ENCODE measurements at regions of chr19 and their contacts with region 1.

Region 1: DNA sequence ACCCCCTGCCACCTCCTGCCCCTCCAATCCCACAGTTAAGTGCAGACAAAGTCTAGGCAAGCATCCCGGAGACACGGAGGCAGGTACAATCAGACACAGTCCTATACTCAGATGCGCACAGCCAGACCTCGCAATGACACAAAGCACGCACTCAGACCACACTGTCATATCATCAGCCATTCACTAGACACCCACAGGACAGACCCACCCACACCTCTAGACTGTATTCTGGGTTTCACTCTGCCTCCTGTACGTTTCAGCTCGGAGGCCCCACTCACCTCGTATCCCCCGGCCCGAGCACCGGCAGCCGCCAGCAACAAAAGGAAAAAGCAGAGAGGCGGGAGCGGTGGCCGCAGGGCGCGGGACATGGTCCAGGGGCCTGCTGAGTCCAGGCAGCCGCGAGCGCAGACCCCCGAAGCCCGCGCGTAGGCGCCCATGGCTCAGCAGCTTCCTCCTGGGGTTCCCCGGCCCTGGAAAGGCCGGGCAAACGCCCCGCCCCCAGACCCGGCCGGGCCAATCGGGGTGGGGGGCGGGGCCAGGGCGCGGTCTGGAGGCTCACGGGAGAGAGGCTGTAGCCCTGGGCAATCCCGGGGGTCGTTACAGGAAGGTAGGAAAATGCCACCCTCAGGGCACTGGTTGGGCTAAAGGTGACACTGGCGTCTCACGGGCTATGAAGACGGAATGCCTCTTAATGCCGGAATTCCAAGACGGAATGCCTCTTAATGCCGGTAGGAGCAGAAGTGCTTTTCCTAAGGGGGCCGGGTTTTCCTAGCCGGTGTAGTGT is at the starts of genes MAN2B1 and WDR83:
- DNase-seq: no peak
- ATAC-seq: peak; percentile 81
- H3K4me3 ChIP-seq: peak within 1 kb of the TSS; percentile 61 to 84
- H3K27ac ChIP-seq: peak within 1 kb of the TSS; percentile 58
- H3K4me1 ChIP-seq: peaks cover 19 to 37% of the 10 kb centered on the region in 2 experiments
- H3K27me3 ChIP-seq: no peaks in the 10 kb centered on the region
- CTCF ChIP-seq: no peak
- POLR2A ChIP-seq: no peak
- RAD21 ChIP-seq: no peak
- total RNA-seq, gene MAN2B1: 48.3 TPM
- total RNA-seq, gene WDR83: 20.1 TPM

Region 2: DNA sequence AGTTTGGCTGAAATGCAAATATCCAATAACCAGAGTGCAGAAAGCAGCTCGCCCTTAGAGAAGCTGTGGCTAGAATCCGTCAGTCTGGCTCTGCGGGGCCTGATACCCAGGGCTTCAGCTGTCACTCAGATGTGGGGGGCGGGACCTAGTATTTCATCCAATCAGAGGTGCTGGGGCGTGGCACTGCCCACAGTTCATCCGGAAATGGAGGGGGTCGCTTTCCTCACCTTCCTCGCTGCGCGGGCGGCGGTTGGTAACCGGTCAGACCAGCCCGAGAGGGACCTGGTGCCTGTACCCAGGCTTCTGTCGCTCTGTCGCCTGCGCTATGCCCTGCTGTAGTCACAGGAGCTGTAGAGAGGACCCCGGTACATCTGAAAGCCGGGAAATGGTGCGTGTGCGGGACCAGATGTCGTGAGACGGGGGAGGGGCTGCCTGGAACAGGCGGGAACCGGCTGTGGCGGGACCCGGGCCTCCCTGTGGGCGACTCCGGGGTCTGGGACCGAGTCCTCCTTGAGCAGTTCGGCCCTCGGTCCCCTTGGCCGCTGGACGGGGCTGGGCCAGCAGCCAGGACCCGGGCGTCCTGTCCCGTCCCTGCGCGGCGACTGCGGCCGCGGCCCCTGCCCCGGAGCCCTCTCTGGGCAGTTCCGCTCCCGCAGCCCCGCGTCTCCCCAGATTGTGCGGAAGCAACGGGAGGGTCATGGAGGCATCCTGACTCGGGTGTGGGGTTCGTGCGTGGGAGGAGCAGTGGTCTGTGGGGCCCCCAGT is 741.4 kb before region 1 on chr19 and contains the start of gene ZNF700:
- CTCF ChIA-PET with region 1: no interaction called
- POLR2A ChIA-PET with region 1: no interaction called
- RAD21 ChIA-PET with region 1: no interaction called
- intact Hi-C with region 1: loop called (anchors 10 kb)
- DNase-seq: peak; percentile 85
- ATAC-seq: peak; percentile 94
- H3K4me3 ChIP-seq: peak within 1 kb of the TSS; percentile 79 to 86
- H3K27ac ChIP-seq: peak within 1 kb of the TSS; percentile 94
- H3K4me1 ChIP-seq: peaks cover 0 to 22% of the 10 kb centered on the region in 2 experiments; a peak in 2 of 4 replicates
- H3K27me3 ChIP-seq: no peaks in the 10 kb centered on the region
- CTCF ChIP-seq: no peak
- POLR2A ChIP-seq: no peak
- RAD21 ChIP-seq: no peak
- total RNA-seq, gene ZNF700: 9.3 TPM

Region 3: GRCh38 chr19:12555456-12555930 is 111.0 kb before region 1 on chr19:
- CTCF ChIA-PET with region 1: no interaction called
- POLR2A ChIA-PET with region 1: no interaction called
- RAD21 ChIA-PET with region 1: no interaction called
- intact Hi-C with region 1: no loop called
- DNase-seq: no peak
- ATAC-seq: no peak
- H3K4me3 ChIP-seq: no peak overlapping the region
- H3K27ac ChIP-seq: no peak overlapping the region
- H3K4me1 ChIP-seq: peaks cover 8 to 13% of the 10 kb centered on the region in 2 experiments
- H3K27me3 ChIP-seq: no peaks in the 10 kb centered on the region
- CTCF ChIP-seq: no peak
- POLR2A ChIP-seq: no peak
- RAD21 ChIP-seq: no peak

Region 4: GRCh38 chr19:12689581-12690216 is 23.2 kb after region 1 on chr19:
- CTCF ChIA-PET with region 1: no interaction called
- POLR2A ChIA-PET with region 1: no interaction called
- RAD21 ChIA-PET with region 1: no interaction called
- intact Hi-C with region 1: no loop called
- DNase-seq: no peak
- ATAC-seq: peak; percentile 10; the same call in 1 of the 2 replicates
- H3K4me3 ChIP-seq: no peak overlapping the region
- H3K27ac ChIP-seq: no peak overlapping the region
- H3K4me1 ChIP-seq: no peaks in the 10 kb centered on the region
- H3K27me3 ChIP-seq: no peaks in the 10 kb centered on the region
- CTCF ChIP-seq: no peak
- POLR2A ChIP-seq: no peak
- RAD21 ChIP-seq: no peak

Measured in HCT116 (cell line).